H1 (cell line): ENCODE measurements at regions of chr10 and their contacts with region 1.

Region 1: DNA sequence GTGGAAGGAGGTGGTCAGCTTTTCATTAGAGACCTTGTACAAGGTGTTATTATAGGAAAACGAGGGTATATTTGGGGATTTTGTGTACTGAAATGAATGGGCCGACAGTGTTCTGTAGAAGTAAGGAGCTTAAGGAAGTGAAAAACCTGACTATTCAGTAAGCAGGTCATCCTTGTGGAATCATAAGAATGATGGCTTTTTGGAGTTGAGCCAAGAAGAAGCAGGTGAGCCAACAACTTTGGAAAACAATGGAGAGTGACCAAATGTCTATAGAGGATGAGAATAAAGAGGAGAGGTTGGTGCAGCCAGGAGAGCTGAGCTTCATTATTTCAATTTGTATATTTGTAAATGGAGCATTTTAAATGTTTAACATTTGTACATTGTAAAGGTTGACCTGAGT is 595.7 kb downstream of the CCSER2 start:
- DNase-seq: no peak
- H3K4me3 ChIP-seq: no peak overlapping the region
- H3K27ac ChIP-seq: no peak overlapping the region
- H3K4me1 ChIP-seq: no peaks in the 10 kb centered on the region
- H3K27me3 ChIP-seq: no peaks in the 10 kb centered on the region
- CTCF ChIP-seq: no peak
- EP300 ChIP-seq: no peak
- POLR2A ChIP-seq: no peak
- RAD21 ChIP-seq: no peak

Region 2: GRCh38 chr10:84908491-84908890 is 15.6 kb before region 1 on chr10:
- CTCF ChIA-PET with region 1: interaction called, 11 read pairs
- POLR2A ChIA-PET with region 1: no interaction called
- DNase-seq: no peak
- H3K4me3 ChIP-seq: no peak overlapping the region
- H3K27ac ChIP-seq: no peak overlapping the region
- H3K4me1 ChIP-seq: no peaks in the 10 kb centered on the region
- H3K27me3 ChIP-seq: no peaks in the 10 kb centered on the region
- CTCF ChIP-seq: no peak
- EP300 ChIP-seq: no peak
- POLR2A ChIP-seq: no peak
- RAD21 ChIP-seq: no peak